GM13977 (cell line): ENCODE measurements at regions of chr16 and their contacts with region 1.

Region 1: DNA sequence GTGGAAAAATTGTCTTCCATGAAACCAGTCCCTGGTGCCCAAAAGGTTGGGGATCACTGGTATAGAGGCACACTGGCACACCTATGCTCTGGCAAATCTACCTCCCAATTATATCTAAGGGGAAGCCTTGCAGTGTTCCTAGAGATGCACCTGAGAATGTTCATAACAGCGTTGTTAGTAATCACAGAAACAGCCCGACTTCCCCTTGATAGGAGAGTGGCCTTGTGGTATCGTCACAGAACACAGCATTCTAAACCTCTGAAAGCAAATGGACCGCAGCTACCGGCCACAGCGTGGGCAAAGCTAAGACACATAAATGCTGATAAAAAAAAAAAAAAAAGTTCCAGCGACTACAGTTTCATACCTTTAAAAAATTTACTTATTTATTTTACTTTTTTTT is 39.1 kb upstream of the ADGRG1 start:
- DNase-seq: no peak
- CTCF ChIP-seq: no peak

Region 2: GRCh38 chr16:57394444-57394843 is 194.9 kb before region 1 on chr16:
- in situ Hi-C with region 1: no loop called
- DNase-seq: no peak
- CTCF ChIP-seq: no peak

Region 3: DNA sequence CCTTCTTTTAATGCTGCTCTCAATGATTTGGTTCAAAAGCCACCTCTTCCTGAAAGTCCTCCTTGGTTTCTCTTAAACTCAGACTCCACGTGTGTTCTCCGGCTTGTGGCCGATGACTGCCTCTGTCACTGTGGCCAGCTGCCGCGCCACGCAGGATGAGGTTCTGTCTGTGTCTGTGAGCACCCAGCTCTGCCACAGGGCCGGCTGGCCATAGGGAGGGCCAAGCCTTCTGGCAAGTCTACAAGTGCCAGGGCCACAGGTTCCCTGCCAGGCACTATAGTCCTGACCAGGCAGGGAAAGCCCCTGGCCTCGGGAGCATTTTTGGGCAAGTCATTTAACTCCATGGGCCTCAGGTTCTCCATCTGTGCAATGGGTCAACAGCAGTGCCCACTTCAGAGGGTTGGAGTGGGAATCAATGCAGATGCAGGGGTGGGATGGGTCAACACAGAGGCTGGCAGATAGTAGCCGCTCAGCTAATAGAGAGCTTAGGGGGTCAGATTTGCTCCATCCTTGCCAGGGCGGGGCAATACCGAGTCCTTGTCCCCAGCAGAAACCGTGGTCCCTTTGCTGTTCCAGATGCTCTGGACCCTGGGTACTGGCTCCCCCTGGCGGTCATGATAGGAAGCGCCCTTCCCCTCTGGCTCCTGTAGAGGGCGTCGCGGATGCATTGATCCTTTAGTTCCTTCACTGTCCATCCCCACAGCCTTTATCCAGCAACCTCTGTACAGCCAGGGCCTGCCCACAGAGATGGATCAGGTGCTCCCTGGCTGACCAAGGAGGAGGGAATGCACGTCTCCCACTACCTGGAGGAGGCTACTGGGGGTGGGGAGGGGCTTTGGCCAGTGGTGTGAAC is 59.4 kb after region 1 on chr16:
- in situ Hi-C with region 1: loop called (anchors 5 kb)
- DNase-seq: peak; percentile 94
- CTCF ChIP-seq: peak; percentile 100